ENCODE measurements at regions of chr1 and their contacts with region 1.

Region 1: GRCh38 chr1:17419626-17420328 is 19.7 kb downstream of the RCC2 start:
- DNase-seq: peak; percentile 35 to 79
- ATAC-seq: peak; percentile 89 to 96
- H3K4me3 ChIP-seq: peak overlapping the region in 3 of 4 donors; percentile 5 to 34 (median 25)
- H3K27ac ChIP-seq: peak overlapping the region; percentile 70 to 84 (median 78)
- H3K4me1 ChIP-seq: peaks cover 6 to 8% of the 10 kb centered on the region in 2 donors
- H3K27me3 ChIP-seq: no peaks in the 10 kb centered on the region
- CTCF ChIP-seq: peak; percentile 96 to 100 (median 98)
- POLR2A ChIP-seq: peak in 1 of 2 donors; percentile 27

Region 2: GRCh38 chr1:15559294-15559761 is 1860.4 kb before region 1 on chr1:
- in situ Hi-C with region 1: no loop called
- intact Hi-C with region 1: no loop called
- DNase-seq: no peak
- ATAC-seq: no peak
- H3K4me3 ChIP-seq: no peak overlapping the region
- H3K27ac ChIP-seq: no peak overlapping the region
- H3K4me1 ChIP-seq: no peaks in the 10 kb centered on the region
- H3K27me3 ChIP-seq: no peaks in the 10 kb centered on the region
- CTCF ChIP-seq: no peak
- POLR2A ChIP-seq: no peak

Region 3: GRCh38 chr1:17433261-17433660 is 13.5 kb after region 1 on chr1:
- in situ Hi-C with region 1: no loop called
- intact Hi-C with region 1: no loop called
- DNase-seq: no peak
- ATAC-seq: no peak
- H3K4me3 ChIP-seq: no peak overlapping the region
- H3K27ac ChIP-seq: no peak overlapping the region
- H3K4me1 ChIP-seq: peaks cover 7 to 11% of the 10 kb centered on the region in 2 donors
- H3K27me3 ChIP-seq: no peaks in the 10 kb centered on the region
- CTCF ChIP-seq: no peak
- POLR2A ChIP-seq: no peak

Region 4: GRCh38 chr1:17475729-17476128 is 56.0 kb after region 1 on chr1:
- in situ Hi-C with region 1: loop called in 1 of 4 experiments (anchors 10 kb)
- intact Hi-C with region 1: loop called (anchors 10 kb)
- DNase-seq: no peak
- ATAC-seq: no peak
- H3K4me3 ChIP-seq: no peak overlapping the region
- H3K27ac ChIP-seq: no peak overlapping the region
- H3K4me1 ChIP-seq: no peaks in the 10 kb centered on the region
- H3K27me3 ChIP-seq: no peaks in the 10 kb centered on the region
- CTCF ChIP-seq: no peak
- POLR2A ChIP-seq: no peak

Region 5: GRCh38 chr1:17485280-17485679 is 65.5 kb after region 1 on chr1:
- in situ Hi-C with region 1: loop called in 1 of 4 experiments (anchors 10 kb)
- intact Hi-C with region 1: no loop called
- DNase-seq: no peak
- ATAC-seq: no peak
- H3K4me3 ChIP-seq: no peak overlapping the region
- H3K27ac ChIP-seq: no peak overlapping the region
- H3K4me1 ChIP-seq: no peaks in the 10 kb centered on the region
- H3K27me3 ChIP-seq: no peaks in the 10 kb centered on the region
- CTCF ChIP-seq: peak in 1 of 5 experiments; percentile 16
- POLR2A ChIP-seq: no peak

Measured in gastrocnemius medialis (tissue), 4 donors.